ENCODE measurements at regions of chr2 and their contacts with region 1.

Region 1: DNA sequence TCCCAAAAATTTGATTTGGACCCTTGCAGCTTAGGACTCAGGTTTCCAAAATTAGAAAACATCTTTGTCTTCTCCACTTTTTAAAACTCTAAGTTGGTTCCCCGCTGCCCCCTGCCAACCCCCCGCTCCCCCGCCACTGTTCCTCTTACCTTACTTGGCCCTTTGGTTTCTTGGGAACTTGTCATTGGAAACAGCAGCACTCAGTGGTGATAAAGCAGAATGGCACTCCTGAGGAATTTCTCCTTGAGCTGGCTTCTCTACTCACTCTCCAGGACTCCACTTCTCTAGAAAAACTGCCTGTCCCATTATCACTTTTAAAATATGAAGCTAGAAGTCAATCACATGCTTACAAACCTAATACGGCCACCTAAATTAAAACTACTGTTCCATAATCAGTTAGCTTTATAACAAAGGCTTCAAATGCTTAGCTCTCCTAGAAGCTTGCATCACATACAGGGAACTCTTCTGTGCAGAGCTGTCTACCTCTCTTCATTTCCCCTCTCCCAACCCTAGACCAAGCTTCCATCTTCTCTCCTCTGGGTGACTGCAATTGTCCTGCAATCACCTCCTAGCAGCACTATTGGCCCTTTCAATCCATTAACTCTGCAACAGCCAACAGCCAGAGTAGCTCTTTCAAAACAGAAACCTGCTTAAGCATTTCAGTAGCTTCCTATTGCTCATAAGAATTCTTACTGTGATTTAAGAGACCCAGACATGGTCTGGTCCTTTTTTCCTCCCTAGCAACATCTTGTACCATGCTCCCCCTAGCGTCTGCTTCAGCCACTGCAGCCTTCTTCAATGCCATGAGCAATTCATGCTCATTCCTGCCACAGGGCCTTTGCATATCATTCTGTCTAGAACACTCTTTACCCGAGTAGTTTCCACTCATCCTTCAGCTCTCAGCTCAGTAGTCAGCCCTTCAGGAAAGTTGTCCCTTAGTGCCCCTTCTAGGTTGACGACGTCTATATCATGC is 15.2 kb upstream of the PLEKHM3 start:
- DNase-seq: peak; percentile 77
- ATAC-seq: peak; percentile 86
- H3K4me3 ChIP-seq: no peak overlapping the region
- H3K27ac ChIP-seq: no peak overlapping the region
- H3K4me1 ChIP-seq: peaks cover 6% of the 10 kb centered on the region; the same call in 1 of the 2 replicates
- H3K27me3 ChIP-seq: no peaks in the 10 kb centered on the region
- CTCF ChIP-seq: peak; percentile 74

Region 2: DNA sequence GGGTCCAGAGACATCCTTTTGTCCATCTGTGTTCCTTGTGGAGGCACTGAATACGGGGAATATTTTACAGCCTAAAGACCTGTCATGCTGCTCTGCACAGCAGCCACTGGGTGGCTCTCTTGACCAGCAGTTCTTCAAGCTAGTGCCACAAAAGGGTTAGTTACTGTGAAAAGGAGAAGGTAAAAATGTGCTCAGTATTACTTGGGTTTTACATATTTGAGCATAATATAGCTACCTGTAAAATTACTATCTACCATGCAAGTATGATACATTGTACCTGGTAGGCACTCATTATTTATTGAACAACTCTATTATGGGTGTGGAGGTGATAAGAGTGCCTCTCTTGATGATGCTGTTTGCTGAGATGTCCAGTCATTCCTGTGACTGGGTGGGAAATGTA is 294.4 kb before region 1 on chr2:
- CTCF ChIA-PET with region 1: interaction called, 14 read pairs
- POLR2A ChIA-PET with region 1: no interaction called
- intact Hi-C with region 1: loop called (anchors 1 kb)
- DNase-seq: peak; percentile 75
- ATAC-seq: peak; percentile 93
- H3K4me3 ChIP-seq: no peak overlapping the region
- H3K27ac ChIP-seq: no peak overlapping the region
- H3K4me1 ChIP-seq: no peaks in the 10 kb centered on the region
- H3K27me3 ChIP-seq: no peaks in the 10 kb centered on the region
- CTCF ChIP-seq: peak; percentile 98

Region 3: DNA sequence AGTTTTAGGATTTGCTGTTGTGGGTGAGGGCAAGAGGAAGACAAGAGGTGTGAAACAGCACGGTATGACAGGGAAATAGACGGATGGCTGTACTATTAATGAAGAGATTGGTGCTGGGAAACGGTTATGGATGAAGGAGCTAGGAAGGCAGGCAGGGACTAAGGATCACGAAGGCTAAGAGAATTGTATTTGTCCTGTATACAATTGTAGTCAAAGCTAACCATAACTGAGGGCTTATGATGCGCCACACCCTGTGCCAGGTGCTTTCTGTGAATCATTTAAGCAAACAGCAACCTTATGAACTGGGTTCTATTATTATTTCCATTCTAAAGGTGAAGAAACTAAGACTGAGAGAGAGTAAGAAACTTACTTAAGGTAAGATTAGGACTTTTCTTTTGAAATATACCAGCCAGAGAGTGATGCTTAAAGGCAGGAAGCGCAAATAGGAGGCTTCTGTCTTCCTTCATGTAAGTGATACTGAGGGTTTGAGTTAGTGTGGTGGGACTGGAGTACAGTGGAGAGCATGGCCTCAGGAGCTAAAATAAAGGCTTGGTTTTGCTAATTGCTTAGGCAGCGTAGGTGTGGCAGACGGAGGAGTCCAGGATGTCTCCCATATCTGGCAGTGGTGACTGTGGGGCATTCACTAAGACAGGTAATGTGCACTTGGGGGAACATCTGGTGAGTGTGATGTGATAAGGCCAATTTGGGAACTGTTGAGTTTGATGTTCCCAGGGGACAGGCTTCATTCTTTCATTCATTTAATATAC is 101.0 kb before region 1 on chr2:
- CTCF ChIA-PET with region 1: interaction called, 11 read pairs
- POLR2A ChIA-PET with region 1: no interaction called
- intact Hi-C with region 1: no loop called
- DNase-seq: peak; percentile 68
- ATAC-seq: peak; percentile 93
- H3K4me3 ChIP-seq: no peak overlapping the region
- H3K27ac ChIP-seq: peak overlapping the region; percentile 34
- H3K4me1 ChIP-seq: peaks cover 14% of the 10 kb centered on the region
- H3K27me3 ChIP-seq: no peaks in the 10 kb centered on the region
- CTCF ChIP-seq: no peak

Region 4: DNA sequence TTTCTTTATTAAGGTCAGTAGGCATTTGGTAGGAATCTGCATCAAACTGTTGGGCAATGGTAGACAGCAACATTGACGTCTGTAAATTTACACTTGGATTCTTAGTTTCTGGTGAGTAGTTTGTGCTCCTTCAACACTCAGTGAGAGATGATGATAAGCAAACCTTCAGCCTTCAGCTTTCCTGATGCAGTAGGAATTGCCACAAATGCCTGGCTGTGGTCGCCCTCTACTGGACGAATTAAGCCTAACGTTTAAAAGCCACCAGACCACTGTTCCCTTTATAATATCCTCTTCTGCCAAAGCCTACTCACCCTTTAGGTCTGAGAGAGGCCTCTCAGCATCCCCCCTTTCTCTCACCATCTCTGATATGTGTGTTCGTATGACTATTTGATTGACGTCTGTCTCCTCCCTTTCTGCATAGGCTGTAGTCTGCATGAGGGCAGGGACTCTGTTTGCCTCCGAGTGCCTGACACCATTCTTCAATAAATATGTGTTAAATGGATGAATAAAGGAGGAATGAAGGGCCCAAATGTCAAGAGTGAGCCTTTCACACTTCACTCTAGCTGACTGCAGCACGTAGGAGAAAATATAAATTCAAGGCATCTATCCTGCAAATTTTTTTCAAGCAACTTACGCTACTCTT is 31.9 kb after region 1 on chr2:
- CTCF ChIA-PET with region 1: interaction called, 4 read pairs
- POLR2A ChIA-PET with region 1: no interaction called
- intact Hi-C with region 1: loop called (anchors 2 kb)
- DNase-seq: peak; percentile 77
- ATAC-seq: peak; percentile 85
- H3K4me3 ChIP-seq: no peak overlapping the region
- H3K27ac ChIP-seq: no peak overlapping the region
- H3K4me1 ChIP-seq: no peaks in the 10 kb centered on the region
- H3K27me3 ChIP-seq: peaks cover 16% of the 10 kb centered on the region; the same call in 1 of the 2 replicates
- CTCF ChIP-seq: peak; percentile 88

Measured in PC-3 (cell line).